Pancreas (tissue), 10 donors: ENCODE measurements at regions of chr1 and their contacts with region 1.

Region 1: GRCh38 chr1:153510984-153511410 is 24.8 kb downstream of the S100A6 start:
- DNase-seq: peak; percentile 69 to 87 (median 82)
- ATAC-seq: peak; percentile 80 to 89 (median 89)
- H3K4me3 ChIP-seq: no peak overlapping the region
- H3K27ac ChIP-seq: no peak overlapping the region
- H3K4me1 ChIP-seq: no peaks in the 10 kb centered on the region
- H3K27me3 ChIP-seq: no peaks in the 10 kb centered on the region
- CTCF ChIP-seq: peak; percentile 63 to 85 (median 72)

Region 2: GRCh38 chr1:153563483-153563901 is 52.5 kb after region 1 on chr1:
- intact Hi-C with region 1: loop called in 1 of 3 experiments (anchors 5 kb)
- DNase-seq: no peak
- ATAC-seq: no peak
- H3K4me3 ChIP-seq: no peak overlapping the region
- H3K27ac ChIP-seq: no peak overlapping the region
- H3K4me1 ChIP-seq: peaks cover 0 to 20% (median 0%) of the 10 kb centered on the region in 3 donors
- H3K27me3 ChIP-seq: no peaks in the 10 kb centered on the region
- CTCF ChIP-seq: no peak

Region 3: DNA sequence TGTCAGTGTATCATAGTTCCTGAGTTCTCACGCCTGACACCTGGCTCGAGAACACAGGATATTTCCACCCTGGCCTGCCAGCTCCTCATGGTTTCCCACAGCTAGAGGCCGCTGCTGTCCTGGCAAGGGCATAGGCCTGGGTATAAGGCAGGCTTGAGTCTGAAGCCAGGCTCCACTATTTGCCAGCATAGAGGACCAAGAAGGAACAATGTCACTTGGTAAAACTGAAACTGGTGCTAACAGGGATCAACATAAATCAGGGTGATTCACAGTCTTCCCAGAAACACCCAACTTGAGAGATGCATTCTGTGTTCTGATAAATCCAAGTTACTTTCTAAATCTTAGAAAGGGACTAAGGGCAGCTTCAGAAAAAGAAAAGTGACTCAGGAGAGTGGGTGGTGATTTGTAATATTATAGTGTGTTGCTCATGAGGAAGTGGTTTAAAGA is 61.6 kb after region 1 on chr1:
- intact Hi-C with region 1: loop called in 1 of 3 experiments (anchors 2 kb)
- DNase-seq: peak; percentile 80 to 92 (median 84)
- ATAC-seq: peak; percentile 90 to 94 (median 92)
- H3K4me3 ChIP-seq: no peak overlapping the region
- H3K27ac ChIP-seq: peak overlapping the region in 2 of 4 donors; percentile 50 to 51
- H3K4me1 ChIP-seq: peaks cover 0 to 9% (median 0%) of the 10 kb centered on the region in 3 donors
- H3K27me3 ChIP-seq: no peaks in the 10 kb centered on the region
- CTCF ChIP-seq: peak; percentile 69 to 88 (median 77)